ENCODE measurements at regions of chr19 and their contacts with region 1.

Region 1: DNA sequence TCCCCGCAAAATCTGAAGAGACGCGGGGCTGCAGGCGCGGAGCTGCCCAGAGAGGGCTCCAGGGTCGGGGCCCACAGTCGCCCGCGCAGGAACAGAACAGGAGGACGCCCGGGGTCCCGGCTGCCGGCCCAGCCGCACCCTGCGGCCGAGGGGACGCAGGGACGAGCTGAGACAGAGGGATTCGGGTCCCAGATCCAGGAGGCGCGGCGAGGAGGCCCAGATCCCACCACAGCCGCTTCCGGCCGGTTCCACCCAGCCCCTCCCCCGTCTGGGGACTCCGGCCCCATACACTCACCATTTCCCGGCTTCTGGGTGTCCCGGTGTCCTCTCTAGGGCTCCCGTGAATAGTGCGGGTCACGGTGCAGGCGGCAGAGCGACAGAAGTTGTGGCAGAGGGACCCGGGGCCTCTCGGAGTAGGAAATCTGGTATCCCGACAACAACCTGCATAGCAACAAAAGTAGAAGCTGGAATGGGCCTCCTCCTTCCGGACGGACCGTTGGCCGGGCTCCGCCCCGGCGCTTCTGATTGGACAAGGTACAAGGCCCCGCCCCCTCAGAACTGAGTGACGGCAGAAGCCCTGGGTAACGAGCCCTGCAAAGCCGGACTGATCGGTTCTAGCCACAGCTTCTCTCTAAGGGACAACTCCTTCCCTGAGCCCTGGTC is at the start of gene ZNF20:
- DNase-seq: peak; percentile 98
- H3K4me3 ChIP-seq: peak within 1 kb of the TSS; percentile 81 to 93 (median 85)
- H3K27ac ChIP-seq: peak within 1 kb of the TSS; percentile 82 to 91 (median 88)
- H3K4me1 ChIP-seq: peaks cover 17 to 34% (median 28%) of the 10 kb centered on the region in 4 donors
- H3K27me3 ChIP-seq: no peaks in the 10 kb centered on the region
- CTCF ChIP-seq: peak in 1 of 3 experiments; percentile 10
- EP300 ChIP-seq: no peak
- POLR2A ChIP-seq: no peak
- total RNA-seq, gene ZNF20: 1.3 to 5.8 (median 3.1) TPM

Region 2: DNA sequence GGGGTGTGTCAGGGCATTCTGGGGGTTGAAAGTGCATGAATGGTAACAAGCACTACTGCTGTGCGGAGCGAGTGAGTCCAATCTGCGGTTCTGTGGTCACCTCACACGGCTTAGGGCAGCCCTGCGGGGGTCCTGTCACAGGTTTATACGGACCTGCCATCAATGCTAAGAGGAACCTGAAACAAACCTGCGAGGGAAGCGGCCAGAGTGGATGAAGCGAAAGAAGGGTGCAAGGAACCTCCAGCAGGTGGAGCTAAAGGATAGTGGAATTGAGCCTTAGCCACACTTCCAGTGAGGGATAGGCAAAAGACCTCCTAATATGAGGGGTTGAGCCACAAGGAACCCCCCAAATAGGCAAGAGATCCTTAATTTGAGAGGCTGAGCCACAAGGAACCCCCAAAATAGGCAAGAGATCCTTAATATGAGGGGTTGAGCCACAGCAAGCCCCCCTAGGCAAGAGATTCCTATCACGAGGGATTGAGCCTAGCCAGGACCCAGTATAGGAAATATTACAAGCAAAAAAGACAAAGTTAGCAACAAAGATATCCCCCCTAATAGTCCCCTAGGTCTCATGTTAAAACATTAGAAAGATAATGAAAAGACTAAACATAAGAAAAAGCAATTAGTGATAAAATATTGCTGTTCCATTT is 258.7 kb before region 1 on chr19:
- intact Hi-C with region 1: loop called (anchors 5 kb)
- DNase-seq: no peak
- H3K4me3 ChIP-seq: no peak overlapping the region
- H3K27ac ChIP-seq: no peak overlapping the region
- H3K4me1 ChIP-seq: peaks cover 0 to 7% (median 2%) of the 10 kb centered on the region in 4 donors
- H3K27me3 ChIP-seq: no peaks in the 10 kb centered on the region
- CTCF ChIP-seq: peak; percentile 64 to 80 (median 75)
- EP300 ChIP-seq: no peak
- POLR2A ChIP-seq: no peak

Region 3: GRCh38 chr19:11924886-11925650 is 214.9 kb before region 1 on chr19 and contains the start of gene ZNF700:
- intact Hi-C with region 1: loop called (anchors 5 kb)
- DNase-seq: peak; percentile 99
- H3K4me3 ChIP-seq: peak within 1 kb of the TSS; percentile 92 to 99 (median 93)
- H3K27ac ChIP-seq: peak within 1 kb of the TSS; percentile 93 to 97 (median 94)
- H3K4me1 ChIP-seq: peaks cover 20 to 36% (median 33%) of the 10 kb centered on the region in 4 donors
- H3K27me3 ChIP-seq: no peaks in the 10 kb centered on the region
- CTCF ChIP-seq: no peak
- EP300 ChIP-seq: peak; percentile 24
- POLR2A ChIP-seq: no peak
- total RNA-seq, gene ZNF700: 7.6 to 12.0 (median 9.5) TPM

Region 4: GRCh38 chr19:11964858-11965645 is 175.0 kb before region 1 on chr19 and contains the start of gene ZNF763:
- intact Hi-C with region 1: loop called (anchors 2 kb)
- DNase-seq: peak; percentile 99
- H3K4me3 ChIP-seq: peak within 1 kb of the TSS; percentile 65 to 91 (median 86)
- H3K27ac ChIP-seq: peak within 1 kb of the TSS; percentile 90 to 99 (median 94)
- H3K4me1 ChIP-seq: peaks cover 18 to 27% (median 22%) of the 10 kb centered on the region in 4 donors
- H3K27me3 ChIP-seq: no peaks in the 10 kb centered on the region
- CTCF ChIP-seq: no peak
- EP300 ChIP-seq: peak; percentile 40
- POLR2A ChIP-seq: no peak
- total RNA-seq, gene ZNF763: 3.3 to 7.5 (median 4.8) TPM

Region 5: GRCh38 chr19:12092065-12092867 is 47.8 kb before region 1 on chr19:
- intact Hi-C with region 1: loop called (anchors 1 kb)
- DNase-seq: peak; percentile 96
- H3K4me3 ChIP-seq: peak overlapping the region; percentile 68 to 78 (median 72)
- H3K27ac ChIP-seq: peak overlapping the region; percentile 77 to 88 (median 84)
- H3K4me1 ChIP-seq: peaks cover 3 to 27% (median 24%) of the 10 kb centered on the region in 4 donors
- H3K27me3 ChIP-seq: no peaks in the 10 kb centered on the region
- CTCF ChIP-seq: no peak
- EP300 ChIP-seq: no peak
- POLR2A ChIP-seq: no peak

Measured in esophagus muscularis mucosa (tissue), 4 donors.